ENCODE measurements at regions of chr4 and their contacts with region 1.

Region 1: DNA sequence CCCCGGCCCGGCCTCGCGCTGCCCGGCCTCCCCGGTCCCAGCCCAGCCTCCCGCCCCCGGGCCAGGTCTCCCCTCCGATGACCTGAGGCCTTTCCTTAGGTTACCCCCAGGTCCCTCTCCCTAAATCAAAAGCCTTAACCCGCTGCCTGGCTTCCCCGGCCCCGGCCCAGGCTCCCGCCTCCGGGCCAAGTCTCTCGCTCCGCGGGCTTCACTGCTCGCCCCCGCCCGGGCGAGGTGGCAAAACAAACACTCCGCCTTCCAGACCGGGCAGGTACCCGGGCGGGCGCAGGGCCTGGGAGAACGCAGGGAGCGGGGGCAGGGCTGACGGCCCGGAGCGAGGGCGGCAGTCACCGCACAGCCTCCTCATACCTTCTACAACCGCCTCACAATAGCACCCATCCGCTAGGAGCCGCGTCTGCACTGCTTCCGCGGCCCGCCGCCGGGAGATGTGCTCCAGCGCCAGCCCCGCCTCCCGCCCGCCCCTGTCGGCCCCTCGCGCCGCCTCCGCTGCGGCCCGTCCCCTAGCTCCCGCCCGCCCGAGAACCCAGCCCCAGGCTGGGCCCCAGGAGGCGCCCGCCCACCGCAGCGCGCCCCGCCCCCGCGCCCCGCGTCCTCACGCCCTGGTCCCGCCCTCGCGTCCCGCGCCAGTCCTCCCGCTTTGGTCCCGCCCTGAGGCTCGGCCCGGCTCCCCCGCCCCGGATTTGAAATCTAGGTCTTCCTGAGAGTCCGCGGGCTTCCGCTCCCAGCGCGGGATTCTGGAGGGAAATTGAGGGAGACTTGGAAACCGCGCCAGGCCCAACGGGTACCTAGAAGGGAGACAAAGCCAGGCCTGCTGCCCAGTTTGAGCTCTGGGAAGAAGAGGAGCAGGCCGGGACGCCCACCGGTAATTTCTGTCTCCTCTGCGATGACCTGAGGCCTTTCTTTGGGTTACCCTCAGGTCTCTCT is at the starts of genes CASP3 and PRIMPOL:
- DNase-seq: peak; percentile 94 to 96
- ATAC-seq: peak; percentile 87 to 97 (median 87)
- H3K4me3 ChIP-seq: peak within 1 kb of the TSS; percentile 89
- H3K4me3 Mint-ChIP-seq: peak within 1 kb of the TSS; percentile 97
- H3K27ac ChIP-seq: peak within 1 kb of the TSS; percentile 88
- H3K27ac Mint-ChIP-seq: peak within 1 kb of the TSS; percentile 89 to 90
- H3K4me1 ChIP-seq: peaks cover 29% of the 10 kb centered on the region
- H3K4me1 Mint-ChIP-seq: peaks cover 62 to 69% of the 10 kb centered on the region in 2 donors
- H3K27me3 ChIP-seq: no peaks in the 10 kb centered on the region
- H3K27me3 Mint-ChIP-seq: no peaks in the 10 kb centered on the region
- CTCF ChIP-seq: no peak
- total RNA-seq, gene CASP3: 20.9 to 35.1 (median 30.2) TPM
- total RNA-seq, gene PRIMPOL: 13.2 to 17.9 (median 16.9) TPM

Region 2: DNA sequence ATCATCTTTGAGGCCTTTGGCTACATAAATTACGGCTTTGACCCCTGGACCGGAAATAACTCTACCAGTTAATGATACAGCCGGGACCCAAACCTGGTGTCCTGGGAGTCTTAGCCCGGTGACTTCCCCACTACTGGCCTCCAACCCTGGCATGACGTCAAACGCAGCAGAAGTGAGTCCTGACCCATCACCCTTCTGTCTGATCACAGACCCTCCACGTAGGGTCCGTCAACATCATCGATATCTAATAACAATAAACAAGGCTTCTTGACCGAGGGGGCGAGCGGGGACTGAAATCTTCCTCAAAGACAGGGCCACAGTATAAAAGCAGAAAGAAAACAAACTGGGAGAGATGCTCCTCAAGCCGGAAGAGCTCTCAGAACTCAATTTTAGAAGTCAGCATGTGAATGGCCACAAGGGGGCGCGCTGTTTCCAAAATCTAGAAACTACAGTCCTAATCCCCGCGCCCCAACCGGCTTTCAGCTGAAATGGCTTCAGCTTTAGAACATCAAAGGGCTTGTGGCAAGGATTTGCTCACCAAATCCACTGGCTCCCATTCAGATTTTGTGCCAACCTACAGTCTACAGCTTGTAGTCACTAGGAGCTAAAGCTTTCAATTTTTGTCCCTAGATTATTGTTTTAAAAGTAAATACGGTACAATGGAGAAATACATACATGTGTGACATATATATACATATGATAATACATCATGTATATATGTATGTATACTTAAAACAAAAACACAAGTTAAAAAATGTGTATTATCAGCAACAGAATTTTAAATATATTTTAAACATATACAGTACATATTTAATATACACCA is 385.2 kb before region 1 on chr4:
- intact Hi-C with region 1: loop called (anchors 1 kb)
- DNase-seq: peak; percentile 91 to 96
- ATAC-seq: peak; percentile 73 to 89 (median 77)
- H3K4me3 ChIP-seq: no peak overlapping the region
- H3K4me3 Mint-ChIP-seq: no peak overlapping the region
- H3K27ac ChIP-seq: no peak overlapping the region
- H3K27ac Mint-ChIP-seq: peak overlapping the region; percentile 22 to 78
- H3K4me1 ChIP-seq: peaks cover 15% of the 10 kb centered on the region
- H3K4me1 Mint-ChIP-seq: peaks cover 9 to 23% of the 10 kb centered on the region in 2 donors
- H3K27me3 ChIP-seq: no peaks in the 10 kb centered on the region
- H3K27me3 Mint-ChIP-seq: no peaks in the 10 kb centered on the region
- CTCF ChIP-seq: peak; percentile 76

Region 3: GRCh38 chr4:184417802-184418511 is 231.3 kb before region 1 on chr4:
- intact Hi-C with region 1: loop called (anchors 1 kb)
- DNase-seq: peak in 1 of 2 donors; percentile 62
- ATAC-seq: peak; percentile 43 to 61 (median 60)
- H3K4me3 ChIP-seq: no peak overlapping the region
- H3K4me3 Mint-ChIP-seq: peak overlapping the region; percentile 43
- H3K27ac ChIP-seq: peak overlapping the region; percentile 80
- H3K27ac Mint-ChIP-seq: peak overlapping the region; percentile 87 to 92
- H3K4me1 ChIP-seq: peaks cover 22% of the 10 kb centered on the region
- H3K4me1 Mint-ChIP-seq: peaks cover 57 to 59% of the 10 kb centered on the region in 2 donors
- H3K27me3 ChIP-seq: no peaks in the 10 kb centered on the region
- H3K27me3 Mint-ChIP-seq: no peaks in the 10 kb centered on the region
- CTCF ChIP-seq: no peak

Region 4: DNA sequence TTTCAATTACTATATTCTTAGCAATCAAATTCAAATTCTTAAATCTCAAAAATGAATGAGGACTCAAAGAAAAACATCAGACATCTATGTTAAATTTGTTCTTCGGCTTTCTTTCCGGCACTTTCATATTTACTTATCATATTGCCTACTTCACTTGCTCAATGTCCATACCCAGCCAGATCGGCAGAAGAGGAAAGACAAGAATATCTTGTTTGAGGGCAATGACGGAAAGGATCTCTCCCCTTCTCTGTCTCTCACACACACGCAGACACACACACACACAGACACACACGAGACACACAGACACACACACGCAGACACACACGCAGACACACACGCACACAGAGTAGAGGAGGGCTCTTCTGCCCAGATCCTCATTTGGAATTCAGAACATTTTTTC is 161.8 kb before region 1 on chr4:
- intact Hi-C with region 1: no loop called
- DNase-seq: no peak
- ATAC-seq: no peak
- H3K4me3 ChIP-seq: no peak overlapping the region
- H3K4me3 Mint-ChIP-seq: no peak overlapping the region
- H3K27ac ChIP-seq: no peak overlapping the region
- H3K27ac Mint-ChIP-seq: no peak overlapping the region
- H3K4me1 ChIP-seq: no peaks in the 10 kb centered on the region
- H3K4me1 Mint-ChIP-seq: no peaks in the 10 kb centered on the region
- H3K27me3 ChIP-seq: no peaks in the 10 kb centered on the region
- H3K27me3 Mint-ChIP-seq: no peaks in the 10 kb centered on the region
- CTCF ChIP-seq: no peak

Region 5: GRCh38 chr4:184538023-184538599 is 111.2 kb before region 1 on chr4:
- intact Hi-C with region 1: loop called (anchors 2 kb)
- DNase-seq: peak; percentile 62 to 83
- ATAC-seq: peak; percentile 73 to 87 (median 79)
- H3K4me3 ChIP-seq: peak overlapping the region; percentile 70
- H3K4me3 Mint-ChIP-seq: peak overlapping the region; percentile 98
- H3K27ac ChIP-seq: peak overlapping the region; percentile 95
- H3K27ac Mint-ChIP-seq: peak overlapping the region; percentile 99 to 100
- H3K4me1 ChIP-seq: peaks cover 21% of the 10 kb centered on the region
- H3K4me1 Mint-ChIP-seq: peaks cover 45% of the 10 kb centered on the region in 2 donors
- H3K27me3 ChIP-seq: no peaks in the 10 kb centered on the region
- H3K27me3 Mint-ChIP-seq: no peaks in the 10 kb centered on the region
- CTCF ChIP-seq: peak; percentile 74

Region 6: DNA sequence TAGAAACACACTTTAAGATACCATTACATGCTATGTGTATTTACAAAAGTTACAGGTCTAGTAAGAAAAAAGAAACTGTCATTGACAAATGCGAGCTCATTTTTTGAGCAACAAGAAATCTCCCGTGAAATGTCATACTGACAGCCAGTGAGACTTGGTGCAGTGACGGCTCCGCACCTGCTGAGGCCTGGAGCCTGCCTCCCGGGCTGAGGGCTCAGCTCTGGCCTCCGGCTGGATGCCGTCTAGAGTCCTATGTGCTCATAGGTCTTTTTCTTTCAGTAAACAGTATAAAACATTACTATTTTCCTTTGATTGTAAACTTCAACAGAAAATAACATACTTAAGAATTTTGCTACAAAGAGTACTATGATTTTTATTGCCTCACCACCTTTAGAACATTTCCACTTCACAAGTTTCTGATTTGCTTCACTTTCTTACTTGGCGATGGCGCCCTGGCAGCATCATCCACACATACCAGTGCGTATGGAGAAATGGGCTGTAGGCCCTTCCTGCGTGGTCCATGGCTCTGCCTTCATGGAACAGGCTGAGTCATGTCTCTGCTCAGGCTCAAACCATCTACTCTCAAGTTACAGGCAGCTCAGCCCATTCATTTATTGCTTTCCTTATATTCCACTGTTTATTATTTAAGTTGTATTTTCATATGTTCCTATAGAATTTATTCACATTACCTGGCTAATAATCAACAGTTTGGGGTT is 21.4 kb before region 1 on chr4:
- intact Hi-C with region 1: no loop called
- DNase-seq: no peak
- ATAC-seq: no peak
- H3K4me3 ChIP-seq: no peak overlapping the region
- H3K4me3 Mint-ChIP-seq: no peak overlapping the region
- H3K27ac ChIP-seq: no peak overlapping the region
- H3K27ac Mint-ChIP-seq: peak overlapping the region; percentile 54 to 85
- H3K4me1 ChIP-seq: peaks cover 21% of the 10 kb centered on the region
- H3K4me1 Mint-ChIP-seq: peaks cover 34 to 41% of the 10 kb centered on the region in 2 donors
- H3K27me3 ChIP-seq: no peaks in the 10 kb centered on the region
- H3K27me3 Mint-ChIP-seq: no peaks in the 10 kb centered on the region
- CTCF ChIP-seq: no peak

Region 7: DNA sequence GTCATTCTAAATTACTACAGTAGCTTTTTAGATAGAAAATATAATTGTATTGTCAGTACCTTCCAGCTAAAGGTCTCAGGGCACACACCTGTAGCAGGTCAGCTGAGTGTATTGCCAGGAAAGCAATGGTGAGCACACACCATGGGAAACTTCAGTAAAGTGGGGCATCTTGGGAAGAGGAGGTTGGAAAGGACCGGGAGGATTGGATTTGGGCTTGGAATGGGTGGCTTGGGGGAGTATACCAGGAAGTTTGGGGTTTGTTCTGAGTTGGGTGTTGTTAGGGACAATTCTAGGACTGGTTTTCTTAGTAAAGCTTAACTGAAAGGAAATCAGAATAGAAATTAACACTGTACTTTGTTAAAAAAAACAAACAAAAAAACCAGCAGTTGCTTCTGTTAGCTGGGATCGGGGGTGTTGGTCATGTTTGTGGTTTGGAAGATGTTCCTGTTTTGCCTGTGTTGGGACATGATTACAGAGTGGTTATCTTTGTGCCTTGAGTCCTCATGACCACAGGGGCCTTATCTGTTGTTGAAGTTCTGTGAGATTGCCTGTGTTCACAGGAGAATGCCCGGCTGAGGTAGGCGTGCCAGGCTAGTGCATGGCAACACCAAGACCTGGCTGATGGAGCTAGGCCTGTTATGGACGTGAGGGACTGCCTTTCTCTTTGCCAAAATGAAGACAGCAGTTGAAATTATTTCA is 35.3 kb after region 1 on chr4:
- intact Hi-C with region 1: no loop called
- DNase-seq: no peak
- ATAC-seq: peak in 2 of 3 donors; percentile 29 to 90
- H3K4me3 ChIP-seq: no peak overlapping the region
- H3K4me3 Mint-ChIP-seq: no peak overlapping the region
- H3K27ac ChIP-seq: peak overlapping the region; percentile 6
- H3K27ac Mint-ChIP-seq: peak overlapping the region; percentile 80 to 90
- H3K4me1 ChIP-seq: peaks cover 4% of the 10 kb centered on the region
- H3K4me1 Mint-ChIP-seq: peaks cover 13% of the 10 kb centered on the region in 2 donors
- H3K27me3 ChIP-seq: no peaks in the 10 kb centered on the region
- H3K27me3 Mint-ChIP-seq: no peaks in the 10 kb centered on the region
- CTCF ChIP-seq: no peak

Region 8: DNA sequence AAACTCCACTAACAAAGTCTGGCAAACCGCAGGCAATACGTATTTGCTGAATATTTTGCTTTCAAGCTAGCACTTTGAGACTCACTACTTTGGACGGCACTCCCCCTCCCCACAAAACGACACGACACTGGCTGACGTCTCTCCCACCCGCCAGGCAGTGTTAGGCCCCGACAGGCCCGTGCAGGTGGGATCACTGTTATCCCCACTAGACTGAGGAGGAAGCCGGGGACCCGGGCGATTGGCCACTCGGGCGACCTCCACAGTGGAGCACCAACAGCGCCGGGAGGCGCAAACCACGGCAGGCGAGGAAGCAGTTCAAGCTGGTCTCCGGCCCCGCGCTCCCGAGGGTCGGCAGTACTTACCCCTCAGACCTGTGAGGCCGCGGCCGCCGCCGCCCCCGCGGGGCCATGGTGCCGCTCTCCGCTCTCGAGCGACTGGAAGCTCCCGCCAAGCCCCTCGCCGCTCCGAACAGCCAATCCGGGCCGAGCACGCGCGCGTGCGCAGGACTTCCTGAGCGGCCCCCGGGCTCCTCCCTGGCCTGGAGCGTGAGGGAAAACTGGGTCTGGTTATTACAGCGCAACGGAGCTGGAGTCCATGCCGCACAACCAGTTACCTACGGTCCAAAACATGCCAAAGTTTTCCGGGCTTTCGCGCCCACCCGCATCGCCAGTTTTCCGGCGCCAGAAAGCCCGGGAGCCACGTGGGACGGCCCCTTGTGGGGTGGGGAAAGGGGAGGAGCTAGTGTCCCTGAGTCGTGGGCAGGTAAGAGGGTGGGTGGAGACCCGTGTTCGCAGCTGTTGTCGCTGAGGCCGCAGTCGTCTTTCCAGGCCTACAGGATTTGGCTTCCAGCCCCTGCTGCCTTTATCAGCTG is 84.6 kb after region 1 on chr4 and contains the start of gene CENPU:
- intact Hi-C with region 1: loop called (anchors 1 kb)
- DNase-seq: peak; percentile 95 to 97
- ATAC-seq: peak; percentile 95 to 98 (median 95)
- H3K4me3 ChIP-seq: peak within 1 kb of the TSS; percentile 69
- H3K4me3 Mint-ChIP-seq: peak within 1 kb of the TSS; percentile 91
- H3K27ac ChIP-seq: peak within 1 kb of the TSS; percentile 41
- H3K27ac Mint-ChIP-seq: peak within 1 kb of the TSS; percentile 73 to 90
- H3K4me1 ChIP-seq: peaks cover 9% of the 10 kb centered on the region
- H3K4me1 Mint-ChIP-seq: peaks cover 11 to 16% of the 10 kb centered on the region in 2 donors
- H3K27me3 ChIP-seq: no peaks in the 10 kb centered on the region
- H3K27me3 Mint-ChIP-seq: no peaks in the 10 kb centered on the region
- CTCF ChIP-seq: no peak
- total RNA-seq, gene CENPU: 6.5 to 12.1 (median 10.3) TPM

Region 9: DNA sequence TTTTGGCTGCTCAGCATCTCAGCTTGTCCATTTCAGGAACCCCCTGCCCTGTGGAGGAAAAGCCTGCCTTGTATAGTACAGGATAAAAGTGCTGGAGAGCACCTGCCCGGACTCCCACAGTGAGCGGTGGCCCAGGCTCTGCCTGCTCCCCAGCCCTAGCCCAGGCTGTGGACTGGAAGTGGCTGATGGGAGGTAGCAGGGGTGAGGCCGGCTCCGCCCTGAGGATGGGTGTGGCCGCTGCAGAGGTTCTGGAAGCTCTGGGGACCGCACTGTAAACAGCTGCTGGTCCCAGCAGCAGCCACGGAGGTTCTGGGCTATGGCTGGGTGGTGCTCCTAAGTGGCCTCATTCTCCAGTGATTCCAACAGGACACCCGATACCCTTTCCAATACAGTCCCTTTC is 312.4 kb after region 1 on chr4:
- intact Hi-C with region 1: loop called (anchors 5 kb)
- DNase-seq: no peak
- ATAC-seq: no peak
- H3K4me3 ChIP-seq: no peak overlapping the region
- H3K4me3 Mint-ChIP-seq: no peak overlapping the region
- H3K27ac ChIP-seq: no peak overlapping the region
- H3K27ac Mint-ChIP-seq: no peak overlapping the region
- H3K4me1 ChIP-seq: no peaks in the 10 kb centered on the region
- H3K4me1 Mint-ChIP-seq: peaks cover 7% of the 10 kb centered on the region in 2 donors
- H3K27me3 ChIP-seq: no peaks in the 10 kb centered on the region
- H3K27me3 Mint-ChIP-seq: peaks cover 9 to 14% of the 10 kb centered on the region in 2 donors
- CTCF ChIP-seq: no peak

Region 10: DNA sequence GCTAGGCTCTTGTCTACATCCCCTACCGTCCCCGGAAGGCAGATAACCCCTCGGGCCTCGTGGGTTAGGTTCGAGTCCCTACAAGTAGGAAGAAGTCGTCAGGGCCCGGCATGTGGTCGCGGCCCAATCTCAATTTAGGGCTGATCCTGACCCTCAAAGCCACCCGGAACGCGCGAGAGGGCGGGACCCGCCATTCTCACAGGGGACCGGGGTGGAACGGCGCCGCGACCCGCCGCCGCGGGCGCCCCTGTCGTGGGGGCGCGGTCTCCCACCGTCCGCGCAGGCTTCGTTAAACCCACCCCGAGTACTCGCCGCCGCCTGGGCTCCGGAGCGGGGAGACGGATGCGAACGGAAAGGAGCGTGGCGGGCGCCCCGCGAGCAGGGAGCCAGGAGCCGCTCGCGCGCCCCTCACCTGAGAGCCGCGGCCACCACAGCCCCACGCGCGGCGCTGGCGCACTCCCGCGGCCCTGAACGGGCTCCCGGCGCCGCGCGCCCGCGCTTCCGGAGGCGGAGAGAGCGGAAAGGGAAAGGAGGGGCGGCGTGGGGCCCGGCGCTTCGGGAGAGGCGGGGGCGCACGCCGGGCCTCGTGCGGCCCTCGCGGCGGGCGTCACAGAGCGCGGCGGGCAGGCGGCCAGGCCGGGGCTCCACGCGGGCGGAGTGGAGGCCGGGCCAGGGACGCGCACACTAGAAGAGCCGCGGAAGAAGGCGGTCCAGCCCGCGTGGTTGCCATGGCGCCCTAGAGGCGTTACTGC is 554.4 kb after region 1 on chr4 and contains the start of gene CFAP97:
- intact Hi-C with region 1: loop called (anchors 5 kb)
- DNase-seq: peak; percentile 80 to 94
- ATAC-seq: peak; percentile 86 to 94 (median 90)
- H3K4me3 ChIP-seq: peak within 1 kb of the TSS; percentile 74
- H3K4me3 Mint-ChIP-seq: peak within 1 kb of the TSS; percentile 97
- H3K27ac ChIP-seq: peak within 1 kb of the TSS; percentile 87
- H3K27ac Mint-ChIP-seq: peak within 1 kb of the TSS; percentile 93 to 96
- H3K4me1 ChIP-seq: peaks cover 29% of the 10 kb centered on the region
- H3K4me1 Mint-ChIP-seq: peaks cover 33 to 44% of the 10 kb centered on the region in 2 donors
- H3K27me3 ChIP-seq: no peaks in the 10 kb centered on the region
- H3K27me3 Mint-ChIP-seq: no peaks in the 10 kb centered on the region
- CTCF ChIP-seq: no peak
- total RNA-seq, gene CFAP97: 25.7 to 30.5 (median 25.9) TPM